Activated CD8-positive, alpha-beta T cell treated with anti-CD3 and anti-CD28 coated beads for 36 hours (primary cell): ENCODE measurements at regions of chr5 and their contacts with region 1.

Region 1: DNA sequence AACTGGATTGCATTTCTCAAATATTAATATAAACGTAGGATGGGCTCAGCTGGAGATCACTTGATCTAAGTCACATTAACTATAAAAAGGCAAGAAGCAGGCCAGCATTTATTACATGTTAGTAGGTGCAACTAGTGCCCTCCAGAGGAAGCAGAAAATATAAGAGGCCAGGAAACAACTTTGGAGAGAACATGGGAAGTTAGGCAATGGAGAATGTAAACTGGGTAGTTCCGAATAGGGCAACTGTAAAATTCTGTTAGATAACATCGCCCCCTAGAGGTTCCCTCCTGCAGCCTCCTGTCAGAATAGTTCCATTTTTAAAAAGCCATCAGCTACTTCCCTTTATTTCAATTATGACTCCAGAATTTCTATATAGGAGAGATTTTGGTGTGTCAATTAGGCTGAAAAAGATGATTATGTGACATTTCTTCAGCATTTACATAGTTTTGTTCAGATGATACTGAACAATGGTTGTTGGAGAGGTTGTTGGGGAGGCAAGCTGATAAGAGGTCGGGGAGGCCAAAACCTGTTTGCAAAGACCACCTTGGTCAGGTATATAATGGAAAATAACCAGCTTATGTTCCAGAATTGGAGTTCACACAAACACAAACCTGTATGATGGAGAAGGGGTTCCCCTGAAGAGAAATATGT is 22.4 kb downstream of the CCL28 start:
- DNase-seq: peak; percentile 67
- ATAC-seq: peak; percentile 92
- H3K4me3 Mint-ChIP-seq: no peak overlapping the region
- H3K27ac Mint-ChIP-seq: no peak overlapping the region
- H3K4me1 Mint-ChIP-seq: peaks cover 24% of the 10 kb centered on the region
- H3K27me3 Mint-ChIP-seq: no peaks in the 10 kb centered on the region
- CTCF ChIP-seq: peak; percentile 88

Region 2: GRCh38 chr5:42908509-42909488 is 481.0 kb before region 1 on chr5:
- CTCF ChIA-PET with region 1: interaction called, 13 read pairs
- POLR2A ChIA-PET with region 1: no interaction called
- intact Hi-C with region 1: no loop called
- DNase-seq: peak; percentile 94
- ATAC-seq: peak; percentile 94
- H3K4me3 Mint-ChIP-seq: peak overlapping the region; percentile 90
- H3K27ac Mint-ChIP-seq: peak overlapping the region; percentile 72
- H3K4me1 Mint-ChIP-seq: peaks cover 13% of the 10 kb centered on the region
- H3K27me3 Mint-ChIP-seq: peaks cover 10% of the 10 kb centered on the region
- CTCF ChIP-seq: peak; percentile 94

Region 3: DNA sequence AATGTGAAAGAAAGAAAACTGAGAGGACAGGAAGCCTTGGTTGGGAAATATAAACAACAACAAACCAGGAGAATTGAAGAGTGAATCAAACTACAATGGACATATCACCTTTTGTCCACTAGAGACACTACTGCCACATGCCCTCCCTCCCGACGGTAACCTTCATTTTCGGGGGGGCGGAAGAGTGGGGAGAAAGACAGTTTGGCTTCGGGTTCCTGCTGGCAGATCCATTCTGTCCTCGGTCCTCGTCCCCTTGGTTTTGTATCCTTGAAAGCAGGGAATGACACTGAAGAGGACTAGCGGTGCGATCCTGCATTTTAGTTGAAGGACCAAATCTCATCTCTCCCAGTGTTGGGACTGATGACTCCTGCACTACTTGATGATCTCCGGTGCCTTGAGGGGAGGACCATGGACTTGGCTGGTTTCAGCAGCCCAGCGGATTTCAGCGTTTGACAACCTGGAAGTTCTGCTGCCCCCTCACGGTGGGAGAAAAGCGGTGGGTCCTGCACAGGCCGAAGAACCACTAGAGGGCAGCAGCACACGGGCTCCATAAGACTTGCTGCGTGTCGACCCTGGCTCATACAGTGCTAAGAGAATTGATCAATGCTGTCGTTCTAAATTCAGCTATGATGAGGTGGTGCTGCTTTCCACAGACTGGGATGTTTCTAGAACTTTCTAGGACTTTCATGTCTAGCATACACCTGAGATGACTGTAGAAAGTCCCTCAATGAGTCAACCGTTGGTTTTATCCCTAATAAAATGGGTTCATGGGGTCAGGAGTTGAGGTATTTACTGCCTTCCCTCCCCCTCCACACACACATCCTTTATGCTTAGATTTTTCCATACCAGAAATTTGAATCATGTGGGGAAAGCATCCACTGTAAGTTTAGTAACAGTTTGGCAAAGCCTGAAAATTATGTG is 284.2 kb before region 1 on chr5:
- CTCF ChIA-PET with region 1: interaction called, 22 read pairs
- POLR2A ChIA-PET with region 1: no interaction called
- intact Hi-C with region 1: loop called (anchors 10 kb)
- DNase-seq: peak; percentile 93
- ATAC-seq: peak; percentile 94
- H3K4me3 Mint-ChIP-seq: peak overlapping the region; percentile 71
- H3K27ac Mint-ChIP-seq: peak overlapping the region; percentile 84
- H3K4me1 Mint-ChIP-seq: peaks cover 38% of the 10 kb centered on the region
- H3K27me3 Mint-ChIP-seq: no peaks in the 10 kb centered on the region
- CTCF ChIP-seq: peak; percentile 99

Region 4: DNA sequence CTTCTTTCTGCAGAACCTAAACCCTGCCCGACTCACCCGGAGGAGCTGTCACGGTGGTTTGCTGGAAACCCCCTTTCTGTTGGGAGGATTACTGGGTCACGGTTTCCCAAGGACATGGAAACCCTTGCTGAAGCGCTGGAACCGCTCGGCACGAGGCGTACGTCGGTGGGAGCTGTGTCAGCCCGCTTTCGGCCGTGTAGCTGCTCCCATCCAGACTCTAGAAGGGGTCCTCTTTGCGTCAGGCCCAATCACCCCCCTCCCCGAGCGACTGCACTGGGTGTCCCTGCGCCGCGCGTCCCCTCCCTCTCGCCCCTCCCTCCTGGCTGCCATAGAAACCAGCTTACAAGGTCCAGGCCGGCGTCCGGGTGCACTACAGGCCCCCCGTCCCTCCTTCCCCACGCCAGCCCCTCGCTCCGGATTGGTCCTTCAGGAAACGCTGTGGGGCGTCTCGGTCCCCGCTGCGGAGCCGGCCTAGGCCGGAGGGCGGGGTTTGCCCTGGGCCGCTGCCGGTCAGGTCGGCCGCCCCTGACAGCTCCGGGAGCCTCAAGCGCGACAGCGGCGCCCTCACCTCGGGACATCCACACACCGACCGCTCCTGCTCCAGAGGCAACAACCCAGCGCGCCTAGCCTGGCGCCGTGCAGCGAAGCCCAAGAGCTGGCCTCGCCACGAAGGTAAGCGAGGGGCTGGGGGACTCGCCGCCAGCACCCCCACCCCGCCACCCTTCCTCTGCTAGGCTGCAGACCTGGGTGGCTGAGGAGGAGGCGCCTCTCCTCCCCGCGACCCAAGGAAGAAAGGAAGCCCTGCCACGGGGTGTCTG is 197.9 kb before region 1 on chr5 and contains the start of gene NIM1K:
- CTCF ChIA-PET with region 1: interaction called, 12 read pairs
- POLR2A ChIA-PET with region 1: no interaction called
- intact Hi-C with region 1: no loop called
- DNase-seq: peak; percentile 53
- ATAC-seq: peak; percentile 61
- H3K4me3 Mint-ChIP-seq: peak within 1 kb of the TSS; percentile 82
- H3K27ac Mint-ChIP-seq: peak within 1 kb of the TSS; percentile 75
- H3K4me1 Mint-ChIP-seq: peaks cover 29% of the 10 kb centered on the region
- H3K27me3 Mint-ChIP-seq: peaks cover 21% of the 10 kb centered on the region
- CTCF ChIP-seq: no peak
- total RNA-seq, gene NIM1K: 2.1 to 3.2 TPM

Region 5: GRCh38 chr5:43244823-43245565 is 144.8 kb before region 1 on chr5:
- CTCF ChIA-PET with region 1: interaction called, 10 read pairs
- POLR2A ChIA-PET with region 1: no interaction called
- intact Hi-C with region 1: no loop called
- DNase-seq: no peak
- ATAC-seq: no peak
- H3K4me3 Mint-ChIP-seq: no peak overlapping the region
- H3K27ac Mint-ChIP-seq: no peak overlapping the region
- H3K4me1 Mint-ChIP-seq: peaks cover 4% of the 10 kb centered on the region
- H3K27me3 Mint-ChIP-seq: peaks cover 11% of the 10 kb centered on the region
- CTCF ChIP-seq: no peak

Region 6: GRCh38 chr5:43305948-43306565 is 83.7 kb before region 1 on chr5:
- CTCF ChIA-PET with region 1: interaction called, 36 read pairs
- POLR2A ChIA-PET with region 1: interaction called, 3 read pairs
- intact Hi-C with region 1: loop called (anchors 5 kb)
- DNase-seq: no peak
- ATAC-seq: peak; percentile 61
- H3K4me3 Mint-ChIP-seq: no peak overlapping the region
- H3K27ac Mint-ChIP-seq: peak overlapping the region; percentile 81
- H3K4me1 Mint-ChIP-seq: peaks cover 79% of the 10 kb centered on the region
- H3K27me3 Mint-ChIP-seq: no peaks in the 10 kb centered on the region
- CTCF ChIP-seq: peak; percentile 63

Region 7: DNA sequence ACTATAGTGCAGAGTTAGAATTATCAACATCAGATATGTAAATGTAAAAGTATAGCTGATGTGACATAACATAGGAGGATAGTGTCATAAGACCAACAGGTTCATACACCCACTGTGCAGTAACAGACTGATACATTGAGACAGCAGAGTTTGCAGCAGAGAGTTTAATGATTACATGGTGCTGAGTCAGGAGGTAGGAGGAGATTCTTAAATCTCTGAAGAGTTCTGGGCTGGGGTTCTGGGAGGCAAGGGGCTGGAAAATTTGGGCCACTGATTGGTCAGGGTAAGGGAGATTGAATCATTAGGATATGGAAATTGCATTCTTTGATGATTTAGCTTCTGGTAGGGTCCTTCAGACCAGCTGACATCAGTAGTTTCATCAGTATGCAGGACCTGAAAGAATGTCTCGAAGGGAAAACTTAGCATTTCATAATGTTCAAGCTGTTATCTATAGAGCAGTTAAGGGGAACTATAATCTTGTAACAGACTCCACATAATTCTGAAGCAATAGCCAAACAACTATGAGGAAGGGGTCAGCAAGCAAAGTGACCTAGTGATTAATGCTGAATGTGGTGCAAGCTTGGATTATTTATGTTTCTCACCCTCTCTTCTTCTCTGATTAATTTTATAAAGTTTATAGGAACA is 13.2 kb before region 1 on chr5:
- CTCF ChIA-PET with region 1: interaction called, 11 read pairs
- POLR2A ChIA-PET with region 1: no interaction called
- intact Hi-C with region 1: no loop called
- DNase-seq: no peak
- ATAC-seq: no peak
- H3K4me3 Mint-ChIP-seq: no peak overlapping the region
- H3K27ac Mint-ChIP-seq: no peak overlapping the region
- H3K4me1 Mint-ChIP-seq: no peaks in the 10 kb centered on the region
- H3K27me3 Mint-ChIP-seq: no peaks in the 10 kb centered on the region
- CTCF ChIP-seq: no peak

Region 8: GRCh38 chr5:43437062-43437660 is 47.4 kb after region 1 on chr5:
- CTCF ChIA-PET with region 1: no interaction called
- POLR2A ChIA-PET with region 1: no interaction called
- intact Hi-C with region 1: no loop called
- DNase-seq: no peak
- ATAC-seq: no peak
- H3K4me3 Mint-ChIP-seq: no peak overlapping the region
- H3K27ac Mint-ChIP-seq: no peak overlapping the region
- H3K4me1 Mint-ChIP-seq: no peaks in the 10 kb centered on the region
- H3K27me3 Mint-ChIP-seq: no peaks in the 10 kb centered on the region
- CTCF ChIP-seq: no peak